ENCODE measurements at regions of chr15 and their contacts with region 1.

Region 1: GRCh38 chr15:40893733-40894688 is at the start of gene VPS18:
- DNase-seq: peak; percentile 98 to 99 (median 99)
- ATAC-seq: peak; percentile 97 to 99 (median 98)
- H3K4me3 ChIP-seq: peak within 1 kb of the TSS; percentile 60 to 99 (median 78)
- H3K27ac ChIP-seq: peak within 1 kb of the TSS in 11 of 12 donors; percentile 82 to 96 (median 88)
- H3K4me1 ChIP-seq: peaks cover 0 to 24% (median 14%) of the 10 kb centered on the region in 12 donors
- H3K27me3 ChIP-seq: no peaks in the 10 kb centered on the region
- CTCF ChIP-seq: peak; percentile 96 to 99 (median 98)
- POLR2A ChIP-seq: peak in 1 of 2 donors; percentile 74
- total RNA-seq, gene VPS18: 18.0 to 29.2 (median 23.1) TPM

Region 2: GRCh38 chr15:40323239-40323952 is 570.6 kb before region 1 on chr15 and contains the start of gene INAFM2:
- intact Hi-C with region 1: loop called in 1 of 10 experiments (anchors 5 kb)
- DNase-seq: peak; percentile 92 to 96 (median 95)
- ATAC-seq: peak; percentile 81 to 91 (median 87)
- H3K4me3 ChIP-seq: peak within 1 kb of the TSS; percentile 72 to 94 (median 82)
- H3K27ac ChIP-seq: peak within 1 kb of the TSS; percentile 69 to 99 (median 90)
- H3K4me1 ChIP-seq: peaks cover under 1 to 59% (median 41%) of the 10 kb centered on the region in 12 donors
- H3K27me3 ChIP-seq: no peaks in the 10 kb centered on the region
- CTCF ChIP-seq: peak; percentile 62 to 88 (median 75)
- POLR2A ChIP-seq: no peak
- total RNA-seq, gene INAFM2: 28.6 to 92.7 (median 40.1) TPM

Region 3: GRCh38 chr15:40525855-40526254 is 368.2 kb before region 1 on chr15:
- intact Hi-C with region 1: loop called in 1 of 10 experiments (anchors 10 kb)
- DNase-seq: no peak
- ATAC-seq: no peak
- H3K4me3 ChIP-seq: no peak overlapping the region
- H3K27ac ChIP-seq: no peak overlapping the region
- H3K4me1 ChIP-seq: peaks cover 0 to 8% (median 0%) of the 10 kb centered on the region in 12 donors
- H3K27me3 ChIP-seq: no peaks in the 10 kb centered on the region
- CTCF ChIP-seq: no peak
- POLR2A ChIP-seq: no peak

Region 4: GRCh38 chr15:40684381-40684780 is 209.6 kb before region 1 on chr15:
- intact Hi-C with region 1: loop called in 6 of 10 experiments (anchors 2 to 10 kb)
- DNase-seq: no peak
- ATAC-seq: no peak
- H3K4me3 ChIP-seq: no peak overlapping the region
- H3K27ac ChIP-seq: no peak overlapping the region
- H3K4me1 ChIP-seq: no peaks in the 10 kb centered on the region
- H3K27me3 ChIP-seq: no peaks in the 10 kb centered on the region
- CTCF ChIP-seq: no peak
- POLR2A ChIP-seq: no peak

Region 5: GRCh38 chr15:40754883-40755811 is 138.9 kb before region 1 on chr15 and contains the start of gene RMDN3:
- intact Hi-C with region 1: loop called in 4 of 10 experiments (anchors 5 to 10 kb)
- DNase-seq: peak; percentile 93 to 97 (median 94)
- ATAC-seq: peak; percentile 94 to 100 (median 98)
- H3K4me3 ChIP-seq: peak within 1 kb of the TSS; percentile 70 to 98 (median 86)
- H3K27ac ChIP-seq: peak within 1 kb of the TSS in 11 of 12 donors; percentile 51 to 85 (median 80)
- H3K4me1 ChIP-seq: peaks cover 0 to 24% (median 12%) of the 10 kb centered on the region in 12 donors
- H3K27me3 ChIP-seq: no peaks in the 10 kb centered on the region
- CTCF ChIP-seq: peak in 3 of 12 donors; percentile 20 to 33 (median 29)
- POLR2A ChIP-seq: peak in 1 of 2 donors; percentile 76
- total RNA-seq, gene RMDN3: 12.0 to 22.9 (median 18.5) TPM

Region 6: DNA sequence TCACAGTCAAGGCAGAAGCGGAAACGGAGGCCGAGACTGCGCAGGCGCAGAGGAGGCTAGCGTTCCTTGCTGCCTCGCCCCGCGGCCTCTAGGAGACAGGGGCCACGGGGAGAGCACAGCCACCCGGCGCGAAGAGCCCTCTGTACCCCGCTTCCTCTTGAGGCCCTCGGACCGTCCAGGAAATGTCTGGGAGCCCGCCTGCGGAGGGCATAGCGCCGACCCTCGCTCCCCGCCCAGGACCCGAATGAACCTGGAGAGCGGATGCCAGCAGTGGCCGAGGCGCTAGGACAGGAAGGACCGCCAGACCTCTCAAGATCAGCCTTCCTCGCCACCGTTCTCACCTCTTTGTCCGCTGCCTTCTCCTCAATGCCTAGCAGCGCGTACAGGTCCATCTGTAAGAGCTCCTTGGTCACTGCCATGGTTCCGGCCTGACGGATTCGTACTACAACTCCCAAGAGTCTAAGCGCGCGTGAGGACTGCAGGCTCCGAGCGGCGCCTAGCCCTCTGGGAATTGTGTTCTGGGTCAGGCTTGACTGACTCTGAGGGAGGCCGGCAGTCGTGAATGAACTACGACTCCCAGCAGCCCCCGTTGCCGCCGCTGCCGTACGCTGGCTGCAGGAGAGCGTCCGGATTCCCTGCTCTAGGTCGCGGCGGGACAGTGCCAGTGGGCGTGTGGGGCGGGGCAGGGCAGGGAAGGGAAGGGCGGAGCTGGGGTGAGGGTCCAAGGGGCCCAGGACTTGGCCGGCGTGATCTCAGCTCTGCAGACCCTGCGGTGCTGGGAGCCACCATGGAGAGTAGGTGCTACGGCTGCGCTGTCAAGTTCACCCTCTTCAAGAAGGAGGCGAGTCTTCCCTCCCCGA is 86.8 kb before region 1 on chr15 and contains the starts of genes DNAJC17 and ZFYVE19:
- intact Hi-C with region 1: loop called in 1 of 10 experiments (anchors 1 kb)
- DNase-seq: peak; percentile 97 to 99 (median 98)
- ATAC-seq: peak; percentile 99
- H3K4me3 ChIP-seq: peak within 1 kb of the TSS; percentile 71 to 98 (median 87)
- H3K27ac ChIP-seq: peak within 1 kb of the TSS; percentile 87 to 98 (median 96)
- H3K4me1 ChIP-seq: peaks cover 0 to 40% (median 18%) of the 10 kb centered on the region in 12 donors
- H3K27me3 ChIP-seq: no peaks in the 10 kb centered on the region
- CTCF ChIP-seq: peak in 3 of 12 donors; percentile 7 to 19 (median 10)
- POLR2A ChIP-seq: peak in 1 of 2 donors; percentile 66
- total RNA-seq, gene DNAJC17: 7.6 to 19.7 (median 14.7) TPM
- total RNA-seq, gene ZFYVE19: 11.9 to 27.1 (median 18.8) TPM

Region 7: DNA sequence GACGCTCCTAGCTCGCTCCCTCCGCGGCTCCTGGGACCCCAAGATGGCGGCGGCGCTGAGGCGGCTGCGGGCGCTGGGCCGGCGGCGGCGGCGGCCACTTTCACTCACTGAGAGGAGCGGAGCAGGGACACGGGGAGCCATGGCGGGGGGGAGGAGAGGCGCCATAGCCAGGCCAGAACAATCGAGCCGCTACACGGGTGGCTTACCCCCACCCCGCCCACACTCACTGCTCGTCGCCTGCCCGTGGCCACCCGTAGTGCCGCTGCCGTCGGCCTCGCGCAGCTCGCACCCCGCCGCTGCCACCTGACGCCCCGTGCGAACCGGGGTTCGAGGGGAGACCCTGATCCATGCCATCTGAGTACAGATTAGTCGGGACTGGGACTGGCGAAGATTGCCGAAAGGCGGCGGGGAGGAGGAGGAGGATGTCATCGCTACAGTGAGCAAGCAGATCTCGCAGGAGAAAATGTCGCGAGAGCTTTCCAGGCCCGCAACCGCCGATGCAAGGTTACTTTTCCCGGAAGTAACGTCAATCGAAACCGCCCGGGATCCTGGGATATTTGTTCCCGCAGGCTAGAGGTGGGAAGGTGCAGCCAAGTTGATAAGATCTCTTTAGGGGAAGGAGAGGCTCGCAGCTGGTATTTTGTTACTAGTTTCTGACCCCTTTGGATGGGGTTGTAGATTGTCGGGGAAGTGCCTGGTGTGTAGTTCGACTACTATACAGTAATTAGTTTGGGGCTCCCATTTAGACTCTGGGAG is 222.3 kb after region 1 on chr15 and contains the start of gene INO80:
- intact Hi-C with region 1: loop called in 2 of 10 experiments (anchors 1 to 5 kb)
- DNase-seq: peak; percentile 97 to 100 (median 99)
- ATAC-seq: peak; percentile 95 to 98 (median 96)
- H3K4me3 ChIP-seq: peak within 1 kb of the TSS; percentile 72 to 98 (median 84)
- H3K27ac ChIP-seq: peak within 1 kb of the TSS; percentile 91 to 100 (median 100)
- H3K4me1 ChIP-seq: peaks cover 0 to 24% (median 18%) of the 10 kb centered on the region in 12 donors
- H3K27me3 ChIP-seq: no peaks in the 10 kb centered on the region
- CTCF ChIP-seq: peak in 1 of 12 donors; percentile 18
- POLR2A ChIP-seq: peak in 1 of 2 donors; percentile 77
- total RNA-seq, gene INO80: 9.7 to 20.9 (median 12.6) TPM

Region 8: GRCh38 chr15:41183581-41183980 is 289.6 kb after region 1 on chr15:
- intact Hi-C with region 1: no loop called
- DNase-seq: no peak
- ATAC-seq: no peak
- H3K4me3 ChIP-seq: no peak overlapping the region
- H3K27ac ChIP-seq: no peak overlapping the region
- H3K4me1 ChIP-seq: no peaks in the 10 kb centered on the region
- H3K27me3 ChIP-seq: no peaks in the 10 kb centered on the region
- CTCF ChIP-seq: no peak
- POLR2A ChIP-seq: no peak